HEK293 (cell line): ENCODE measurements at regions of chr5 and their contacts with region 1.

Region 1: GRCh38 chr5:132963175-132964104 is at the start of gene AFF4:
- H3K4me3 ChIP-seq: peak within 1 kb of the TSS; percentile 79
- H3K27ac ChIP-seq: peak within 1 kb of the TSS; percentile 92
- H3K4me1 ChIP-seq: no peaks in the 10 kb centered on the region
- CTCF ChIP-seq: no peak; the same call in 1 of the 2 replicates

Region 2: GRCh38 chr5:132744659-132745058 is 218.8 kb before region 1 on chr5:
- CTCF ChIA-PET with region 1: no interaction called
- POLR2A ChIA-PET with region 1: no interaction called
- H3K4me3 ChIP-seq: no peak overlapping the region
- H3K27ac ChIP-seq: no peak overlapping the region
- H3K4me1 ChIP-seq: no peaks in the 10 kb centered on the region
- CTCF ChIP-seq: no peak

Region 3: GRCh38 chr5:132976852-132977251 is 13.4 kb after region 1 on chr5:
- CTCF ChIA-PET with region 1: interaction called, 3 read pairs
- POLR2A ChIA-PET with region 1: interaction called, 13 read pairs
- H3K4me3 ChIP-seq: no peak overlapping the region
- H3K27ac ChIP-seq: no peak overlapping the region
- H3K4me1 ChIP-seq: no peaks in the 10 kb centered on the region
- CTCF ChIP-seq: no peak

Region 4: GRCh38 chr5:133051580-133052332 is 88.3 kb after region 1 on chr5 and contains the start of gene HSPA4:
- CTCF ChIA-PET with region 1: no interaction called
- POLR2A ChIA-PET with region 1: interaction called, 23 read pairs
- H3K4me3 ChIP-seq: peak within 1 kb of the TSS; percentile 94
- H3K27ac ChIP-seq: peak within 1 kb of the TSS; percentile 97
- H3K4me1 ChIP-seq: peaks cover 19% of the 10 kb centered on the region
- CTCF ChIP-seq: no peak; the same call in 1 of the 2 replicates

Region 5: GRCh38 chr5:133247881-133248624 is 284.6 kb after region 1 on chr5:
- CTCF ChIA-PET with region 1: no interaction called
- POLR2A ChIA-PET with region 1: no interaction called
- H3K4me3 ChIP-seq: no peak overlapping the region
- H3K27ac ChIP-seq: no peak overlapping the region
- H3K4me1 ChIP-seq: peaks cover 16% of the 10 kb centered on the region
- CTCF ChIP-seq: peak; percentile 64; the same call in 1 of the 2 replicates